ENCODE measurements at regions of chr19 and their contacts with region 1.

Region 1: GRCh38 chr19:10543420-10544241 is at the start of gene ATG4D:
- DNase-seq: peak; percentile 56
- ATAC-seq: peak; percentile 80
- H3K4me3 ChIP-seq: peak within 1 kb of the TSS; percentile 92 to 93
- H3K27ac ChIP-seq: peak within 1 kb of the TSS; percentile 91
- H3K4me1 ChIP-seq: peaks cover 10 to 24% of the 10 kb centered on the region in 2 experiments; a peak in 3 of 4 replicates
- H3K27me3 ChIP-seq: no peaks in the 10 kb centered on the region
- CTCF ChIP-seq: no peak
- POLR2A ChIP-seq: peak; percentile 44
- RAD21 ChIP-seq: no peak
- total RNA-seq, gene ATG4D: 45.4 TPM

Region 2: GRCh38 chr19:10043286-10043927 is 500.2 kb before region 1 on chr19:
- CTCF ChIA-PET with region 1: no interaction called
- POLR2A ChIA-PET with region 1: no interaction called
- RAD21 ChIA-PET with region 1: no interaction called
- intact Hi-C with region 1: no loop called
- DNase-seq: no peak
- ATAC-seq: no peak
- H3K4me3 ChIP-seq: no peak overlapping the region
- H3K27ac ChIP-seq: no peak overlapping the region
- H3K4me1 ChIP-seq: no peaks in the 10 kb centered on the region
- H3K27me3 ChIP-seq: peaks cover 12% of the 10 kb centered on the region; the same call in 1 of the 2 replicates
- CTCF ChIP-seq: no peak
- POLR2A ChIP-seq: no peak
- RAD21 ChIP-seq: no peak

Region 3: DNA sequence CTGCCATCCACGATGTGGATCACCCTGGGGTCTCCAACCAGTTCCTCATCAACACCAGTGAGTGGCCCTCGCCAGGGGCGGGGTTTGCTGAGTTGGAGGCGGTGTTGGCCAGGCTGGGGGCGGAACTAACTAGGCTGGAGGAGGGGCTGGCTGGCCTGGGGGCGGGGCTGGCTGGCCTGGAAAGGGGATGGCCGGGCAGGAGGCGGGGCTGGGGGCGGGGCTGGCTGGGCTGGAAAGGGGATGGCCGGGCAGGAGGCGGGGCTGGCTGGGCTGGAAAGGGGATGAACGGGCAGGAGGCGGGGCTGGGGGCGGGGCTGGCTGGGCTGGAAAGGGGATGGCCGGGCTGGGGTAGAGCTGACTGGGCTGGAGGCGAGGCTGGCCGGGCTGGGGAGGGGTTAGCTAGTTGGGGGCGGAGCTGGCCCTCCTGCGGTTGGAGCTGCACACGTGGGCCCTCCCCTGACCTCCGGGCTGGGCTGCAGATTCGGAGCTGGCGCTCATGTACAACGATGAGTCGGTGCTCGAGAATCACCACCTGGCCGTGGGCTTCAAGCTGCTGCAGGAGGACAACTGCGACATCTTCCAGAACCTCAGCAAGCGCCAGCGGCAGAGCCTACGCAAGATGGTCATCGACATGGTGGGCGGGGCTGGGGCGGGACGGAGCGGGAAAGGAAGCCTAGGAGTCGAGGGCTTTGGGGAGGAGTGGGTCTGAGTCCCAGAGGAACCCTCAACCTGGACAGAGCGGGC is 82.4 kb before region 1 on chr19:
- CTCF ChIA-PET with region 1: no interaction called
- POLR2A ChIA-PET with region 1: no interaction called
- RAD21 ChIA-PET with region 1: no interaction called
- intact Hi-C with region 1: no loop called
- DNase-seq: peak; percentile 57
- ATAC-seq: peak; percentile 97
- H3K4me3 ChIP-seq: no peak overlapping the region
- H3K27ac ChIP-seq: no peak overlapping the region
- H3K4me1 ChIP-seq: peaks cover 7 to 13% of the 10 kb centered on the region in 2 experiments
- H3K27me3 ChIP-seq: no peaks in the 10 kb centered on the region
- CTCF ChIP-seq: no peak
- POLR2A ChIP-seq: no peak
- RAD21 ChIP-seq: no peak

Region 4: GRCh38 chr19:10502524-10503001 is 41.1 kb before region 1 on chr19:
- CTCF ChIA-PET with region 1: interaction called, 5 read pairs
- POLR2A ChIA-PET with region 1: no interaction called
- RAD21 ChIA-PET with region 1: no interaction called
- intact Hi-C with region 1: loop called (anchors 5 kb)
- DNase-seq: peak; percentile 79
- ATAC-seq: peak; percentile 87
- H3K4me3 ChIP-seq: peak overlapping the region; percentile 88 to 90
- H3K27ac ChIP-seq: peak overlapping the region; percentile 92
- H3K4me1 ChIP-seq: peaks cover 14 to 32% of the 10 kb centered on the region in 2 experiments
- H3K27me3 ChIP-seq: no peaks in the 10 kb centered on the region
- CTCF ChIP-seq: no peak
- POLR2A ChIP-seq: peak; percentile 92
- RAD21 ChIP-seq: no peak